ENCODE measurements at regions of chr7 and their contacts with region 1.

Region 1: GRCh38 chr7:1704811-1705738 is 35.0 kb downstream of the ELFN1 start:
- DNase-seq: no peak
- ATAC-seq: peak; percentile 60
- H3K4me3 ChIP-seq: no peak overlapping the region
- H3K27ac ChIP-seq: no peak overlapping the region
- H3K4me1 ChIP-seq: peaks cover 23% of the 10 kb centered on the region
- H3K27me3 ChIP-seq: no peaks in the 10 kb centered on the region
- CTCF ChIP-seq: no peak

Region 2: GRCh38 chr7:1225441-1226185 is 479.5 kb before region 1 on chr7:
- CTCF ChIA-PET with region 1: no interaction called
- POLR2A ChIA-PET with region 1: no interaction called
- in situ Hi-C with region 1: no loop called
- intact Hi-C with region 1: no loop called
- DNase-seq: no peak
- ATAC-seq: peak; percentile 74
- H3K4me3 ChIP-seq: no peak overlapping the region
- H3K27ac ChIP-seq: no peak overlapping the region
- H3K4me1 ChIP-seq: no peaks in the 10 kb centered on the region; the same call in 1 of the 2 replicates
- H3K27me3 ChIP-seq: no peaks in the 10 kb centered on the region
- CTCF ChIP-seq: peak; percentile 100

Region 3: GRCh38 chr7:1459522-1459892 is 245.6 kb before region 1 on chr7:
- CTCF ChIA-PET with region 1: no interaction called
- POLR2A ChIA-PET with region 1: no interaction called
- in situ Hi-C with region 1: no loop called
- intact Hi-C with region 1: loop called (anchors 5 kb)
- DNase-seq: peak; percentile 80
- ATAC-seq: peak; percentile 83
- H3K4me3 ChIP-seq: peak overlapping the region in 1 of 2 experiments; percentile 87
- H3K27ac ChIP-seq: no peak overlapping the region
- H3K4me1 ChIP-seq: peaks cover 57% of the 10 kb centered on the region
- H3K27me3 ChIP-seq: no peaks in the 10 kb centered on the region
- CTCF ChIP-seq: no peak